K562 (cell line): ENCODE measurements at regions of chr12 and their contacts with region 1.

Region 1: DNA sequence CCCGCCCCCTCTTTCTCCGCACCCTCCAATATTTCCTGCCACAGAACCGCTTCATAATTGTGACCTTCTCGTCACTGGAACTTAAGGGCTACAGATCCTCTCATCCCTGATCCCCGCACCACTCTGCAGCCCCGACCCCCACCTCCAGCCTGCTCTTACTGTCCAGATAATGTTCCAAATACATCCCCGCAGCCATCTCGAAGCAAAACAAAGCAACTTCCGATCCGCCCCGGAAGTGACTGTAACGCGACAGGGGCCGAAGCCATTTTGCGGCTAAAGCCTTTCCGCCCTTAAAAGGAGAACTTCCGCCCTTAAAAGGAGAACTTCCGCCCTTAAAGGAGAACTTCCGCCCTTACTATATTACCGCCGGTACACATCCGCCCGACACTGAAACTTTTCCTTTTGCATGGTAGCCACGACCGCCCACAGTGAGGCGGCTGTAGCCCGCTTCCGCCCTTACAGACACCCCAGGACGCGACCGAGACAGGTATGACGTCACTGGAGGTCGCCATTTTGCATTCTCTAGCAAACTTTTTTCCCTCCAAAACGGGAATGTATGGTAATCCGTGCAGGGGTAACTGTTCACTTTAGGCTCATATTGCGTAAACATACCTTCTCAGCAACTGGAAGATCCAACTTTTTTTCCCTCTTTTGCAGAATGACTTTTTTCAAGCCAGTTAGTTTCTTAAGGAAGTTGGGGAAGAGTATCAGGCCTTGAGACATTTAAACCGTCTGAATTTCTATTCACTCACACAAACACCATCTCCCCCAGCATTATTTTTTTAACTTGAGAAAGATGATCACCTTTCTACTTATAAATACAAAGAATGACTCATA is at the start of gene ING4:
- DNase-seq: peak; percentile 90 to 98 (median 92)
- ATAC-seq: peak; percentile 98
- H3K4me3 ChIP-seq: peak within 1 kb of the TSS; percentile 62
- H3K27ac ChIP-seq: peak within 1 kb of the TSS; percentile 96
- H3K4me1 ChIP-seq: peaks cover 0 to 12% of the 10 kb centered on the region in 2 experiments; a peak in 2 of 5 replicates
- H3K27me3 ChIP-seq: no peaks in the 10 kb centered on the region
- CTCF ChIP-seq: no peak
- EP300 ChIP-seq: peak; percentile 45
- POLR2A ChIP-seq: peak; percentile 72
- RAD21 ChIP-seq: no peak; a peak in 1 of 4 replicates
- polyA plus RNA-seq, gene ING4: 6.6 to 8.4 TPM

Region 2: GRCh38 chr12:6607751-6608591 is 55.2 kb before region 1 on chr12:
- CTCF ChIA-PET with region 1: no interaction called
- POLR2A ChIA-PET with region 1: no interaction called
- in situ Hi-C with region 1: no loop called
- intact Hi-C with region 1: loop called (anchors 2 kb)
- DNase-seq: peak; percentile 68 to 90 (median 74)
- ATAC-seq: peak; percentile 74
- H3K4me3 ChIP-seq: peak overlapping the region; percentile 0
- H3K27ac ChIP-seq: peak overlapping the region; percentile 79
- H3K4me1 ChIP-seq: peaks cover 38 to 54% of the 10 kb centered on the region in 2 experiments
- H3K27me3 ChIP-seq: no peaks in the 10 kb centered on the region
- CTCF ChIP-seq: no peak
- EP300 ChIP-seq: peak; percentile 26; the same call in 1 of the 2 replicates
- POLR2A ChIP-seq: peak; percentile 63; the same call in 1 of the 2 replicates
- RAD21 ChIP-seq: no peak

Region 3: GRCh38 chr12:6638305-6638704 is 24.8 kb before region 1 on chr12:
- CTCF ChIA-PET with region 1: no interaction called
- POLR2A ChIA-PET with region 1: no interaction called
- in situ Hi-C with region 1: no loop called
- intact Hi-C with region 1: loop called (anchors 2 kb)
- DNase-seq: peak in 1 of 4 experiments; percentile 37
- ATAC-seq: peak; percentile 4; the same call in 2 of the 3 replicates
- H3K4me3 ChIP-seq: peak overlapping the region; percentile 37
- H3K27ac ChIP-seq: peak overlapping the region; percentile 97
- H3K4me1 ChIP-seq: peaks cover 45 to 53% of the 10 kb centered on the region in 2 experiments; a peak in 4 of 5 replicates
- H3K27me3 ChIP-seq: no peaks in the 10 kb centered on the region
- CTCF ChIP-seq: no peak
- EP300 ChIP-seq: no peak
- POLR2A ChIP-seq: no peak
- RAD21 ChIP-seq: no peak

Region 4: DNA sequence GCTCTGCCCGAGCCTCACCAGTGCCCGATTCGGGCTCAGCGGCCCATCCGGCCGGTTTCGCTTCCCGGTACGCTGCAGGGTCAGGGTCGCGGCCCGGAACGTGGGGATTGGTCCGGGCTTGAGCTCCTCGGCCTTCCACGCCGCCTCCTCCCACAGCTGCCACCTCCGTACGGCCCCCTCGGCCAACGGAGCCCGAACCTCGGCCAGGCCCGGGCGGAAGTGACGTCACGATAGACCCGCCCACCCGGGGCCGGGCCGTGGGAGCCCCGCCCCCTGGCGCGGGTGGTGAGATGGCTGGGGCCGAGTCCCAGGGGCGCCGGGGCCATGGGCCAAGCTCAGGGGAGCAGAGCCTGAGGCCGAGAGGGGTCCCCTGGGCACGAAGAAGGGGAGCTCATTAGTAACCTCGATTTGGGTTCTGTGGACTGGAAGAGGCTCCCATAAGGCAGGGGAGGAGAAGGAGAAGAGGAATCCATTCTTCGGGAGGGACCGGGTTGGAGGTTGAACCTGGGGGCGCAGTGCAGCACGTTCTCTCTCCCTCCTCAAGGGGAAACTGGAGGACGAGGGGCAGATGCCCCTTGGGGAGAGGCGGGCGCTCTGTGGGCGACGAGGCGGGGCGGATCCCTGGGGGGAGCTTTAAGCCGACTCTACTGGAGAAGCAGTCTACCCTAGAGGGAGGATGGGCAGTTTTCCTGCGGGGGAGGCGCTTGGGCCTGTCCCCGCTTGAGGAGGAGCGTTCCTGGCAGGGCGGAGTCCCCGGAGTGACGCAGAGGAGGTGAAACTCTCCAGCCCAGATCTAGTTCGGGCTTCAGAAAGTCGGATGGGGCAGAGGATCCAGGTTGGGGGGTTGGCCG is 90.0 kb after region 1 on chr12 and contains the start of gene MLF2:
- CTCF ChIA-PET with region 1: no interaction called
- POLR2A ChIA-PET with region 1: no interaction called
- in situ Hi-C with region 1: no loop called
- intact Hi-C with region 1: no loop called
- DNase-seq: peak; percentile 93 to 97 (median 94)
- ATAC-seq: peak; percentile 97
- H3K4me3 ChIP-seq: peak within 1 kb of the TSS; percentile 99
- H3K27ac ChIP-seq: peak within 1 kb of the TSS; percentile 99
- H3K4me1 ChIP-seq: peaks cover 22 to 25% of the 10 kb centered on the region in 2 experiments
- H3K27me3 ChIP-seq: no peaks in the 10 kb centered on the region
- CTCF ChIP-seq: peak in 1 of 3 experiments; percentile 93; a peak in 3 of 6 replicates
- EP300 ChIP-seq: 0 out of 2 replicates have a peak, but pooled peaks have one; percentile 15
- POLR2A ChIP-seq: peak; percentile 90
- RAD21 ChIP-seq: no peak; a peak in 1 of 4 replicates
- polyA plus RNA-seq, gene MLF2: 11.4 to 15.6 TPM